ENCODE measurements at regions of chr3 and their contacts with region 1.

Region 1: GRCh38 chr3:62220616-62221015 is 152.7 kb downstream of the FEZF2 start:
- DNase-seq: no peak
- ATAC-seq: no peak
- H3K4me3 Mint-ChIP-seq: no peak overlapping the region
- H3K27ac Mint-ChIP-seq: no peak overlapping the region
- H3K4me1 Mint-ChIP-seq: peaks cover 6% of the 10 kb centered on the region; the same call in 1 of the 2 replicates
- H3K27me3 Mint-ChIP-seq: no peaks in the 10 kb centered on the region
- CTCF ChIP-seq: no peak

Region 2: DNA sequence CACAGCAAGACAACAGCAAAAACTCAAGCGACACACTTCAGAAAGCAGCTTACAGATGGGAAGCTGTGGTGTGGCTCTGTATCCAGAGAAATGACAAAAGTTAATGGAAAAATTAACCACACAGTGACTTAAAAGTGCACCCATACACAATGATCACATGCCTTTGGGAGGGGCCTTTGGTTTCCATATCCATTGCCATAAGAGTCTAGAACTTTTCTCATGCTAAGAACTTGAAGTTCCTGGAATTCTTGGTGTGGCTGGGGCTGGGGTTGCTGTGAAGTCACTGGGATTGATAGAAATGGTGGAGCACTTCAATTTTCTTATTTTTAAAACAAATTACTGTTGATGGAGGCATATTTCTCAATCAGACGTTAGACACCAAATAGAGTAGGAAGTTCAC is 261.3 kb after region 1 on chr3:
- CTCF ChIA-PET with region 1: no interaction called
- POLR2A ChIA-PET with region 1: interaction called, 11 read pairs
- DNase-seq: no peak
- ATAC-seq: peak; percentile 79
- H3K4me3 Mint-ChIP-seq: no peak overlapping the region
- H3K27ac Mint-ChIP-seq: peak overlapping the region; percentile 9; the same call in 1 of the 2 replicates
- H3K4me1 Mint-ChIP-seq: peaks cover 18% of the 10 kb centered on the region
- H3K27me3 Mint-ChIP-seq: peaks cover 5% of the 10 kb centered on the region
- CTCF ChIP-seq: no peak